ENCODE measurements at regions of chr17 and their contacts with region 1.

Region 1: GRCh38 chr17:4997302-4998026 is at the starts of genes INCA1 and KIF1C:
- DNase-seq: no peak
- H3K4me3 ChIP-seq: peak within 1 kb of the TSS; percentile 85 to 95
- H3K27ac ChIP-seq: peak within 1 kb of the TSS; percentile 89
- H3K4me1 ChIP-seq: peaks cover 33% of the 10 kb centered on the region
- H3K27me3 ChIP-seq: no peaks in the 10 kb centered on the region
- CTCF ChIP-seq: peak in 1 of 3 experiments; percentile 27
- POLR2A ChIP-seq: peak in 1 of 2 donors; percentile 66
- total RNA-seq, gene INCA1: 1.7 TPM
- total RNA-seq, gene KIF1C: 46.9 TPM

Region 2: GRCh38 chr17:4948931-4949320 is 48.5 kb before region 1 on chr17:
- intact Hi-C with region 1: loop called (anchors 5 kb)
- DNase-seq: no peak
- H3K4me3 ChIP-seq: peak overlapping the region; percentile 91 to 99
- H3K27ac ChIP-seq: peak overlapping the region; percentile 95
- H3K4me1 ChIP-seq: peaks cover 45% of the 10 kb centered on the region
- H3K27me3 ChIP-seq: no peaks in the 10 kb centered on the region
- CTCF ChIP-seq: no peak
- POLR2A ChIP-seq: peak in 1 of 2 donors; percentile 55

Region 3: DNA sequence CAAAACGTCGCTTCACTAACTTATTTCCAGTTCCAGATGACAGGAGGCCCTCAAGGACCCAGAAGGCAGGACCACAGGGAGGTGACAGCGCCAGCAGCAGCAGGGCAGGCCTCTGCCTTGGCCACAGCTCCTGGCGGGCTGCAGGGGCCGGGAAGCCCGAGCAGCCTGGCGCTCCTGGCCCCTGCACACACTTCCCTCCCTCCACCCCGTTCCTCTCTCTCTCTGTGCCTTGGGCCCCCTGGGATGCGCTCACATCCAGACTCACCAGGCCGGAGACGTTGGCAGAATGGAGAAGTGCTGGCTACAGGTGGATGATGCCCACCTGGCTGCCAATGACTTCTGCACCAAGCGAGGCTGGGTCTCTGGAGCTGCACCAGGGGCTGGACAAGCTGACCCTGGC is 181.5 kb after region 1 on chr17:
- intact Hi-C with region 1: no loop called
- DNase-seq: no peak
- H3K4me3 ChIP-seq: no peak overlapping the region
- H3K27ac ChIP-seq: no peak overlapping the region
- H3K4me1 ChIP-seq: no peaks in the 10 kb centered on the region
- H3K27me3 ChIP-seq: no peaks in the 10 kb centered on the region
- CTCF ChIP-seq: no peak
- POLR2A ChIP-seq: no peak

Measured in vagina (tissue), 2 donors.